PC-9 (cell line): ENCODE measurements at regions of chr19 and their contacts with region 1.

Region 1: DNA sequence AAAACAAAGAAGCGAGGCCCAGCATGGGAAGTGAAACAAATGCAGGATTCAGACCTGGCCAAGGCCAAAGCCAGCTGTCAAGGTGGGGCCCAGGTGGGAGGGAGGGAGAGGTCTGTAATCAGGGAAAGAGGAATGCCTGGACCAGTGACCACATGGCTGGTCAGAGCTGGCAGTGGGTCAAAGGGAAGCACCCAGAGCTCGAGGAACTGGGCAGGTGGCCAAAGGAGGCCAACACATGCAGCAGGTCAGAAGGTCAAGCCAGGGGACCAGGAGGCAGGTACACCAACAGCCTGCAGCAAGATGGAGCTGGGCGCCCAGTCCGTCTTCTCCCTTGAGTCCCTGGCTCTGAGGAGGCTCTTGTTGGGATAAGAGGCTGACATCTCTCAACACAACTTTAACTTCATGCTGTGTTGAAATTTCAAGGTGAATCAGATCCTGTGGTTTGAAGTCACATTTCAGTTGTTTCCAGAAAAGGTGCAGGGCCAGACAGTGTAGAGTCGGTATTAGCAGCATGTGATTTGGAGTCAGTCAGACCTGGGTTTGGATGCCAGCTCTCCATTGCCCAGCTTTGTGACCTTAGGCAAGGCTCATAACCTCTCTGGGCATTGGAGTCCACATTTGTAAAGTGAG is 17.2 kb downstream of the GPATCH1 start:
- DNase-seq: peak; percentile 83 to 90
- H3K4me3 ChIP-seq: no peak overlapping the region
- H3K27ac ChIP-seq: peak overlapping the region; percentile 54
- H3K4me1 ChIP-seq: peaks cover 65% of the 10 kb centered on the region
- H3K27me3 ChIP-seq: no peaks in the 10 kb centered on the region
- CTCF ChIP-seq: no peak

Region 2: DNA sequence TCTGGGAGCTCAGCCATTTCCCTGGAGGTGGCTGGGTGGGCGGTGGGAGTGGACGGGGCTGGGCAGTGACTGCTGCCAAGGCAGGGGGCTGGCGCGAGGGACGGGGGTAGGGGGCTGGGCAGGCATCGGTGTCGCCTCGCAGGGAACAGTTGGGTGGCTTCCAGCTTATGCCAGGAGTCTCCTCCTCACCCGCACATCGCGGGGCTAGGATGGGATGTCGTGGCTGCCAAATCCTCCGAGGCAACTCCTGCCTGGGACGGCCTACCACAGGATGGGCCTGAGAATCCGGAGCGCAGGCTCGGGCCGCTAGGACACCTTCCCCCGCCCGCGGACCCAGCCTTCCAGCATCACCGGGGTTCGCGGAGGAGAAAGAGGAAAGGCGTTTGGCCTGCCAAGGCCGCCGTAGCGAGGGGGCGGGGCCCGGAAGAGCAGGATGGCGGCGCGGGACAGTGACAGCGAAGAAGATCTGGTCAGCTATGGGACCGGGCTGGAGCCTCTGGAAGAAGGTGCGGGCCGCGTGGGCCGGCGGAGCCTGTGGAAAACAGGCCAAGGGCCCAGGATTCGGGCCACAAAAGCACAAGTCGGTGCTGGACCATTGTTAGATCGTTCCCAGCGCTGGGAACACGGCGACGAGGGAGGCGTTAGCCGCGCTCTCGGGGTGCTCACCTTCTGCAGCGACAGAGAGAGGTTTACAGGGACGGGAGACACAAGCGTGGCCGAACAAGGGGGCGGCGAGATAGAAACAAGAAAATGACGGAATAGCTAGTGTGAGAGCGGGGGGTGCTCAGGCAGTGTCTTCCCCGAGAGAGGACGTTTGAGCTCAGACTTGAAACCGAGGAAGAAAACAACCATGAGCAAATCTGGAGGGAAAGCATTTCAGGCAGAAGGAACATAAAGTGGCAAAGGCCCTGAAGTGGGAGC is 17.1 kb before region 1 on chr19 and contains the start of gene GPATCH1:
- CTCF ChIA-PET with region 1: no interaction called
- POLR2A ChIA-PET with region 1: interaction called, 11 read pairs
- intact Hi-C with region 1: loop called (anchors 1 kb)
- DNase-seq: peak; percentile 69 to 86
- H3K4me3 ChIP-seq: peak within 1 kb of the TSS; percentile 86
- H3K27ac ChIP-seq: no peak within 1 kb of the TSS
- H3K4me1 ChIP-seq: peaks cover 30% of the 10 kb centered on the region
- H3K27me3 ChIP-seq: no peaks in the 10 kb centered on the region
- CTCF ChIP-seq: no peak
- total RNA-seq, gene GPATCH1: 11.0 and 12.4 TPM in 2 replicates

Region 3: GRCh38 chr19:33332248-33332647 is 234.1 kb after region 1 on chr19:
- CTCF ChIA-PET with region 1: no interaction called
- POLR2A ChIA-PET with region 1: no interaction called
- intact Hi-C with region 1: no loop called
- DNase-seq: no peak
- H3K4me3 ChIP-seq: no peak overlapping the region
- H3K27ac ChIP-seq: no peak overlapping the region
- H3K4me1 ChIP-seq: no peaks in the 10 kb centered on the region
- H3K27me3 ChIP-seq: no peaks in the 10 kb centered on the region
- CTCF ChIP-seq: no peak

Region 4: DNA sequence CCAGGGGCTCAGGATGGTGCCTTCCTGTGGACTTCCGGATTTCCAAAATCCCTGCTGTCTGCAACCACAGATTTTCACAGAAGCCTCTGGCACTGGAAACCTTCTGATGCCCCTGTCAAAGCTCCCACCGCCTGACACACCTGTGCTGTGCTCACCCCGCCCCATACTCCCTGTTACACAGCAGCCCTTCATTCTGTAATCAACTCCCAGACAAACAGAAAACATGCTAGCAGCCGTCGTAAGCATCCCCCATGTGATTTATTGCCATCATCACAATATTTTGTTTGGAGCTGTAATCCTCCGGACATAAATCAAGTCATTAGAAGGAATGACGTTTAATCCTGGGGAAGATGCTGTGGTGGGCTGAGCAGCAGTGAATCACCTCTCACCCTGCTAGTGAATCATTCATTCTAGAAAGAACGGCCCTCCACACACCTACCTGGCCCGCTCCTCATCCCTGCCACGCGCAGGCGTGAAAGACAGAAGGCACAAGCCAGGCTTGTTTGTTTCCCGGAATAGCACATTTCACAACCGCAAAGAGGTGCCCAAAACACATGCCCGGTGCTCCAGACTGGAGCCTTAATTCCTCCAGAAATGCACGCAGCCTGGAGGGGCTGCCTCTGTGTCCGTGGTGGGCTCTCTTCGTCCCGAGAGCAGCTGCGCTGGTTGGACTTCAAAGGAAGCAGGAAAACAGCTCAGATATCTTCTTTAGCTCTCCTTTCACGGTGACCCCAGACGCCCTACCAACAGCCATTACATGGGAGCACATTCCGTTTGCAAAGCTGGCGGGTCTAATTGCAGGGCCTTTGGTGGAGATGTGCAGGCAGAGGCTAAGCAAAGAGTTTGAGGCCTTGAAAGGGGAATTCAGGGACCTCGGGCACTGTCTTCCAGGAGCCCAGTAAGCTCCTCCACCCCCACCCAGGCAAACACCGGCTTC is 657.2 kb after region 1 on chr19:
- CTCF ChIA-PET with region 1: interaction called, 12 read pairs
- POLR2A ChIA-PET with region 1: no interaction called
- intact Hi-C with region 1: no loop called
- DNase-seq: no peak
- H3K4me3 ChIP-seq: no peak overlapping the region
- H3K27ac ChIP-seq: no peak overlapping the region
- H3K4me1 ChIP-seq: no peaks in the 10 kb centered on the region
- H3K27me3 ChIP-seq: peaks cover 82% of the 10 kb centered on the region
- CTCF ChIP-seq: no peak